Panc1 (cell line): ENCODE measurements at regions of chr7 and their contacts with region 1.

Region 1: DNA sequence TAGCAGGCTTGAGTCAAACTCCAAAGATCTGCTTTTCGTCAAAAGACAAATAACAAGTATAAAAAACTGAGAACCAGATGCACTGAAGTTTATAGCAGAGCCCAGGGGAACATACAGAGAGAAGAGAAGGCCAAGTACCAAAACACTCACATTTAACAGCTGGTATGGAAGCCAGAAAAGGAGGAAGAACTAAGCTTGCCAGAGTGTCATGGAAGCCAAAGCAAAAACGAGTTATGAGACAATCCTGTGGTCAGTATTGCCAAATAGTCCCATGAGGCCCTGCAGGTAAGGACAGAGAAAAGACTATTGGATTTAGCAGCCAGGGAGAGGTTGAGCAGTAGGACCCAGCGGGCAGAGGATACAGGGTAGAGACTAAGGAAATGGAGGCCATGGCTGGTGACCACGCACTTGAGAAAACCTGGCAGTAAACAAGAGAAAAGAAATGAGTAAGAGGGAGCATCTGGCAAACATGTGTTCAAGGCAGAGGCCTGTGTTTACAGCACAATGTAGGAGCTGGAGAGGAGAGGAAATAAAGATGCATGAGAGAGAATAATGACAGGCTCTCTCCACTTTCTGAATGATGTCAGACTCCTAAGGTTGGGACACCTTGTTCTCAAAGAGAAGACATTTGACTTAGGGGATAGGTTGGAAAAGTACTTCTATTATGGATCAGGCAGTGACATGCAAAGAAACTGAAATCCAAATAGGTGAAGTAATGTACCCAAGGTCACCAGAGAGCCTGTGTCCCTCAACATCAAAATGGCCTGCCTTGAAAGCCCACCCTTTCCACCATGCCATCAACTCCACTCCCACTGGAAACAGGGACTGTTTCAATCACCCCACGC is 9.1 kb downstream of the CREB3L2 start:
- DNase-seq: no peak
- ATAC-seq: no peak
- H3K4me3 ChIP-seq: no peak overlapping the region
- H3K27ac ChIP-seq: no peak overlapping the region
- H3K4me1 ChIP-seq: no peaks in the 10 kb centered on the region
- H3K27me3 ChIP-seq: no peaks in the 10 kb centered on the region
- CTCF ChIP-seq: no peak

Region 2: DNA sequence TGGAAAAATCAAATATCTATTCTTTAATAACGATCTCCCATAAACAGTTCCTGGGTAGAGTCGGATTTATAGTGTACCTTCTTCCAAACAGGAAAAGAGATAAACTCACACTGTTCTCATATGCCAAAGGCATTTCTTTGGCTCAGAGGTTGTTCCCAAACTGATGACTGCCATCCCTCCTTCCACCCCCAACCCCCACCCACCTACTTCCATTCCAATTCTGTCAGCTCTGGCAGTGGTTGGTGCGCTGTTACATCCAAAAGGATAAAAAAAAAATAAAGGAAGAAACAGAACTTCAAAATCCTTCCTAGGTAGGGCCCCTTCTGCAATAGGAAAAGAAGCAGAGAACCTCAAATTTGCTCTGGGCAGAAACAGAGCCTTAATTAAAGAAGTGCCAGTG is 250.7 kb before region 1 on chr7:
- CTCF ChIA-PET with region 1: no interaction called
- POLR2A ChIA-PET with region 1: no interaction called
- in situ Hi-C with region 1: no loop called
- intact Hi-C with region 1: no loop called
- DNase-seq: no peak
- ATAC-seq: no peak
- H3K4me3 ChIP-seq: no peak overlapping the region
- H3K27ac ChIP-seq: no peak overlapping the region
- H3K4me1 ChIP-seq: no peaks in the 10 kb centered on the region
- H3K27me3 ChIP-seq: 0 out of 2 replicates have a peak, but pooled peaks cover 2% of the 10 kb centered on the region
- CTCF ChIP-seq: no peak

Region 3: GRCh38 chr7:139494835-139495579 is 1502.2 kb after region 1 on chr7:
- CTCF ChIA-PET with region 1: no interaction called
- POLR2A ChIA-PET with region 1: interaction called, 15 read pairs
- in situ Hi-C with region 1: no loop called
- intact Hi-C with region 1: no loop called
- DNase-seq: no peak
- ATAC-seq: no peak
- H3K4me3 ChIP-seq: no peak overlapping the region
- H3K27ac ChIP-seq: no peak overlapping the region
- H3K4me1 ChIP-seq: no peaks in the 10 kb centered on the region
- H3K27me3 ChIP-seq: no peaks in the 10 kb centered on the region
- CTCF ChIP-seq: no peak